Activated CD4-positive, alpha-beta T cell treated with anti-CD3 and anti-CD28 coated beads for 36 hours (primary cell): ENCODE measurements at regions of chr18 and their contacts with region 1.

Region 1: GRCh38 chr18:35005963-35006577 is 35.1 kb upstream of the MAPRE2 start:
- DNase-seq: no peak
- ATAC-seq: peak; percentile 94
- H3K4me3 Mint-ChIP-seq: no peak overlapping the region
- H3K27ac Mint-ChIP-seq: no peak overlapping the region
- H3K4me1 Mint-ChIP-seq: no peaks in the 10 kb centered on the region
- H3K27me3 Mint-ChIP-seq: no peaks in the 10 kb centered on the region

Region 2: DNA sequence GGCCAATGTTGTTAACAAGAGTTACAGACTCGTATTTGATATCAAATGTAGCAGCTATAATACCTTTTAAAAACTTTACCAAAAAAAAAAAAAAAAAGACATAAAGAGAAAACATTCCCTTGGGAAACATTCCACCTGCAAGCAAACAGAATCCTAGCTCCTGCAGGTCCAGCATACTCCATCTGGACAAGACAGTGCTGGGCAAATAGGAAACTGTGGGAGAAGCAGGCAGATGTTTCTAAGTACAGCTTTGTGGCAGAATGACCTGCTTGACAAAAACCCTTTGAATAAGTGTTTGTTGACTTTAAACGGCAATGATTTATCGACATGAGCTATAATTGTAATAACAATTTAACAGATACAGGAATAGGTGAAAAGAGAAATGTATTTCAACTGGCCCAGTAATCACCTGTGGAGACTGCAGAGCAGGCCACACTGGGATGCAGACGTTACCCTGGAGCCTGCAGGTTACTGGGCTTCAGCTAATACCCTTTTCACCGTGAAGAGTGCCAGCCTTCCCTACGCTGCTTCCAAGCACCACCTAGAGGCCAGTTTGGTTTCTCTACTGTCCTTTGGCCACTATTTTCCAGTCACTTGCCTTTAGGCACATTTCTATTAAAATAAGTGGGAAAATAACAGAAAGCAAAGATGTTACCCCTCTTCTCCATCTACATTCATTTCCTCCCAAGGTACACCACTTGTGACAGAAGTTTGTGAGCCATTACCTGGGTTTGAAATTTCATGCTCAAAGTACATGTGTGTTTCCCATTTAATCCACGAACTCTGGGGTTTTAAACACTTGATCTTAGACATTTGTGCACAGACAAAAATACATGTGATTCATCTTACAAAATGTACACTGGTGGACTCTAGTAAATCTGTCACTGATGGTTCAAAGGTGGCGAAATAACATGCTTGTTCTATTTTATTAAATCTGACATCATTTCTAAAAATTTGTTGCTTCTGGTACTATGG is 137.8 kb after region 1 on chr18:
- CTCF ChIA-PET with region 1: interaction called, 8 read pairs
- POLR2A ChIA-PET with region 1: no interaction called
- intact Hi-C with region 1: loop called (anchors 1 kb)
- DNase-seq: peak; percentile 57
- ATAC-seq: peak; percentile 69
- H3K4me3 Mint-ChIP-seq: no peak overlapping the region
- H3K27ac Mint-ChIP-seq: no peak overlapping the region
- H3K4me1 Mint-ChIP-seq: peaks cover 8% of the 10 kb centered on the region
- H3K27me3 Mint-ChIP-seq: no peaks in the 10 kb centered on the region

Region 3: DNA sequence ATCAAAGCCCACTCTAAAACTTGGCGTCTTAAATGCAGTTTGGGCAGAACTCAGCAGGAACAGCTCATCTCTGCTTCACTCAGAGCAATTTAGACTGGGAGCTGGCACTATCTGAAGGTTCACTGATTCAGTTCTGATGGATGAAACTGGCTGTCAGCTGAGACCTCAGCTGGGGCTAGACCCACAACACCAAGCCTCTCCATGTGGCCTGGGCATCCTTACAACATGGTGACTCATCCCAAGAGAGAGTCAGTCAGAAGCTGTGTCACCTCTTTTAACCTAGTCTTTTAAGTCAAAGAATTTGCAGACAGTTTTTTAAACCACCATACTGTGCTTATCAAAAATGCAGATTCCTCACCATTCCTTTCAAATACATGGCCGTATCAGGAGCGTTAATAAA is 172.2 kb after region 1 on chr18:
- CTCF ChIA-PET with region 1: no interaction called
- POLR2A ChIA-PET with region 1: no interaction called
- intact Hi-C with region 1: no loop called
- DNase-seq: peak; percentile 59
- ATAC-seq: peak; percentile 95
- H3K4me3 Mint-ChIP-seq: no peak overlapping the region
- H3K27ac Mint-ChIP-seq: no peak overlapping the region
- H3K4me1 Mint-ChIP-seq: peaks cover 12% of the 10 kb centered on the region
- H3K27me3 Mint-ChIP-seq: no peaks in the 10 kb centered on the region

Region 4: GRCh38 chr18:35355140-35355618 is 349.1 kb after region 1 on chr18:
- CTCF ChIA-PET with region 1: interaction called, 3 read pairs
- POLR2A ChIA-PET with region 1: no interaction called
- intact Hi-C with region 1: loop called in 1 of 2 experiments (anchors 10 kb)
- DNase-seq: peak; percentile 73
- ATAC-seq: peak; percentile 99
- H3K4me3 Mint-ChIP-seq: no peak overlapping the region
- H3K27ac Mint-ChIP-seq: no peak overlapping the region
- H3K4me1 Mint-ChIP-seq: peaks cover 3% of the 10 kb centered on the region
- H3K27me3 Mint-ChIP-seq: no peaks in the 10 kb centered on the region